Common myeloid progenitor, CD34-positive (primary cell): ENCODE measurements at regions of chr11 and their contacts with region 1.

Region 1: DNA sequence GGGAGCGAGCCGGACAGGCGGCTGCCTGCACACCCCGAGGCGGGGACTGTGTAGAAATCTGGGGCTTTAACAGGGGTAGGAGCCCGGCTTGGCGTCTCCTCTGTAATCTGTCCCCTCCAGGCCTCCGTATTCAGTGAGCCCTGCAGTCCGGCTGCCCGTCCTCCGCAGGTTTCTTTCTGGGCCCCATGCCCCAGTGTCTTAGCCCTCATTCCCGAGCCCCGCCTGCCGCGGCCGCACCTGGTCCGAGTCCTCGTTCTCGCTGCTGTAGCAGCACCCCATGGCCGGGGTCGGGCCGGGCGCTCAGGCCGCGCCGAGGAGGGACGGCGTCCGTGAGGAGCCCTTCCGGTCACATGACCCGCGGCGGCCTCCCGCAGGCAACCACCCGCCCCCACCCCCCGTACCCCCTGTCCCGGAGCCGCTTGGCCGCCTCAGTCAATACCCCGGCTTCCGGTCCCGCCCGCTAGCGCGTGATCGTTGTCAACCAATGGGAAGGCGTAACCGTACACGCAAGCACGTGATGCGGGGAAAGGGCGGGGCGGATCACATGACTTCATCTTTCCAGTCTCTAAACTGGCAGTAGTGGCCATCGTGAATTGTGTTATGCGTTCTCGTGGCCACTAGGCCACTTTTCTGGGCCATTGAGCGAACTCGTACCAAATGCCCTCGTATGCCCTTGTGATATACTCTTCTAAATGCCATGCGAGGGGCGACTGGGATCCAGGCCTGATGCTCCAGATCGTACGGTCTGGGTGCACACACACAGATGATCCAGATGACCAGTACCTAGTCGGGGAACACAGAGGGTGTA is at the start of gene LAMTOR1:
- DNase-seq: peak; percentile 99 to 100 (median 100)
- H3K4me3 ChIP-seq: peak within 1 kb of the TSS; percentile 72 to 94 (median 87)
- H3K27ac ChIP-seq: peak within 1 kb of the TSS; percentile 95 to 96
- H3K4me1 ChIP-seq: peaks cover 36 to 54% (median 51%) of the 10 kb centered on the region in 4 experiments
- H3K27me3 ChIP-seq: no peaks in the 10 kb centered on the region

Region 2: GRCh38 chr11:72040726-72041441 is 62.3 kb before region 1 on chr11:
- CTCF ChIA-PET with region 1: interaction called, 394 read pairs
- POLR2A ChIA-PET with region 1: interaction called, 10 read pairs
- DNase-seq: peak; percentile 90 to 94 (median 94)
- H3K4me3 ChIP-seq: peak overlapping the region; percentile 67 to 93 (median 82)
- H3K27ac ChIP-seq: peak overlapping the region; percentile 91 to 95
- H3K4me1 ChIP-seq: peaks cover 19 to 65% (median 50%) of the 10 kb centered on the region in 4 experiments
- H3K27me3 ChIP-seq: no peaks in the 10 kb centered on the region

Region 3: DNA sequence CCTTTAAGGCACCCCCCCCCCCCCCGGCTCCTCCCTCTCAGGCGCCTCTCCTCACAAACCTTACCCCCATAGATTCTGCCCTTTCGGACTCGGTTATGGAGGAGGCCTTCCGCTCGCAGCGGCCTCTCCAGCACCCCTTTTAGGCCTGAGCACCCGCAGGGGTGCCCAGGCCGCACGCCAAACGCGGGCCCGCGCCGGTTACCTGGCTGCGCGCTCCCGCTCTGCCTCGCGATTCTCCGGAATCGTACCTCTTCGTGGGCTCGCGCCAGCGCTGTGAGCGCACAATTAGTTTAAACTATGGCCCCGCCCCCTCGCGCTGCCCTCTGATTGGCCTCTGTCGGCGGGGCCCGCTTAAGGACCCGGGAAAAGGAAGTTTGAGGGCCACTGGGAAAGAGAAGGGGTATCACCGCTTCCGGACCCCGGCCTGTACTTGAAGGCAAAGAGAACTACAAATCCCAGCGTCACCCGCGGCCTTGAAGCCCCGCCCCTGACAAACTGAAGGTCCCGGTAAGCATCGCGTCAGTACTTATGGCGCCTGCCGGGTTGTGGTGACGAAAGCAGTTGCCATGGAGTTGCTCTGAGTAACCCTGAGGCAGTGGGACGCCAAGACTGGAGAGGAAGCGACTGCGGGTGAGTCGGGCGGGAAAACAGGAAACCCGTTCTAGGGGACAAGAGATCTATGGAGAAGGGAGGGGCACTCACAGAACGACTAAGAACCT is 22.7 kb before region 1 on chr11 and contains the starts of genes LRRC51 and NUMA1:
- CTCF ChIA-PET with region 1: interaction called, 86 read pairs
- POLR2A ChIA-PET with region 1: interaction called, 5 read pairs
- DNase-seq: peak; percentile 100
- H3K4me3 ChIP-seq: peak within 1 kb of the TSS; percentile 77 to 93 (median 85)
- H3K27ac ChIP-seq: peak within 1 kb of the TSS; percentile 74 to 90
- H3K4me1 ChIP-seq: peaks cover 10 to 47% (median 33%) of the 10 kb centered on the region in 4 experiments
- H3K27me3 ChIP-seq: no peaks in the 10 kb centered on the region

Region 4: GRCh38 chr11:72174299-72175070 is 71.3 kb after region 1 on chr11:
- CTCF ChIA-PET with region 1: no interaction called
- POLR2A ChIA-PET with region 1: no interaction called
- DNase-seq: no peak
- H3K4me3 ChIP-seq: no peak overlapping the region
- H3K27ac ChIP-seq: no peak overlapping the region
- H3K4me1 ChIP-seq: no peaks in the 10 kb centered on the region
- H3K27me3 ChIP-seq: no peaks in the 10 kb centered on the region